Upper lobe of right lung (tissue), 1 donor: ENCODE measurements at regions of chr11 and their contacts with region 1.

Region 1: GRCh38 chr11:119121008-119121810 is at the start of gene HINFP:
- DNase-seq: peak; percentile 100
- ATAC-seq: peak; percentile 99
- H3K4me3 ChIP-seq: peak within 1 kb of the TSS; percentile 71
- H3K27ac ChIP-seq: peak within 1 kb of the TSS; percentile 85
- H3K4me1 ChIP-seq: peaks cover 12% of the 10 kb centered on the region
- H3K27me3 ChIP-seq: no peaks in the 10 kb centered on the region
- CTCF ChIP-seq: no peak
- total RNA-seq, gene HINFP: 25.2 TPM

Region 2: DNA sequence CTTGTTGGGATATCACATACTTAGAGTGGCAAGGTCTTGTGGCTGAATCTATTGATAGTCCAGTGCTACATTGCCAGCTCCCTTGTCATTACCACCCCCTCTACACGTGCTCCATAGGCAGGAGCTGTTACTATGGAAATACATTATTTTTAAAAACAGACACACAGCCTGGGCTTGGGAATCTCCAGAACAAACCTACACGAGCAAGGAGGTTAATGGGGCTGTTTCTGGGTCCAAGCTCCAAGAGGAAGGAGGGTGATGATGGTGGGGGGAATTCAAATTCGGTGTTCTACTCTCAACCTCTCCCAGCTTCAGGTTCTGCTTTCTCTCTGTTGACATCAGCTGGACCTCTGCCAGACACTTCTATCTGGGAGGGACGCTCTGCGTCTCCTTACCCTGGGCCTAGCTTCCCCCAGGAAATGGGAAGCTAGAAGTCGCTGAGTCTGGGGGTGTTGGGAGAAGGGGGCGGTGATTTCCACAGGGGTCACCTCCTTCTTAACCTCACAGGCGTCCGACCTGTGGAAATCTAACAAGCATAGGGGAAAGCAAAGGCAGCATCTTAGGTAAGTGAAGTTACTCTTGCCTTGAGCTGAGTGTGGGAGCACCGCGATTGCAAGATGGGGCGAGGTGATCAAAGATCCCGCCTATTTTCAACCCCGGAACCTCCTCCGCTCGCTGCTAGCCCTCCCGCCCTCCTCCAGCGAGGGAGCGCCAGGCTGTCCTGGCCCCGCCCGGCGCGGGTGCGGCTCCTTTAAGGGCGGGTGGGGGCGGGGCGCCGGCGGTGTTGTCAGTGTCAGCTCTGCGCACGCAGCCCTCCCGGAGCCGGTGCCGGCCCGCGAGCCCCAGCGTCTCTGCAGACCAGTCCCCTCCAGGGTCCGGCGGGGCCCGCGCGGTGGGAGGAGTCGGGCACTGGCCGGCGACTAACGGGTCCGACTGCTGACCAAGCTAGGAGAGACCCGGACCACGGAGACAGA is 14.4 kb before region 1 on chr11 and contains the start of gene C2CD2L:
- intact Hi-C with region 1: loop called (anchors 2 kb)
- DNase-seq: peak; percentile 95
- ATAC-seq: peak; percentile 94
- H3K4me3 ChIP-seq: peak within 1 kb of the TSS; percentile 99
- H3K27ac ChIP-seq: peak within 1 kb of the TSS; percentile 83
- H3K4me1 ChIP-seq: peaks cover 22% of the 10 kb centered on the region
- H3K27me3 ChIP-seq: no peaks in the 10 kb centered on the region
- CTCF ChIP-seq: no peak
- total RNA-seq, gene C2CD2L: 20.3 TPM